Heart right ventricle (tissue), 16 donors: ENCODE measurements at regions of chr17 and their contacts with region 1.

Region 1: GRCh38 chr17:66975604-66976384 is 11.3 kb downstream of the CACNG4 start:
- DNase-seq: peak in 1 of 2 donors; percentile 45
- ATAC-seq: peak in 6 of 8 donors; percentile 16 to 57 (median 36)
- H3K4me3 ChIP-seq: no peak overlapping the region
- H3K27ac ChIP-seq: no peak overlapping the region
- H3K4me1 ChIP-seq: peaks cover 0 to 42% (median 21%) of the 10 kb centered on the region in 9 donors
- H3K27me3 ChIP-seq: peaks cover 3 to 49% (median 21%) of the 10 kb centered on the region in 7 donors
- CTCF ChIP-seq: peak in 4 of 9 donors; percentile 17 to 44 (median 32)

Region 2: GRCh38 chr17:66963987-66964804 is 11.6 kb before region 1 on chr17 and contains the start of gene CACNG4:
- intact Hi-C with region 1: no loop called
- DNase-seq: no peak
- ATAC-seq: peak in 1 of 8 donors; percentile 38
- H3K4me3 ChIP-seq: peak within 1 kb of the TSS in 9 of 10 donors; percentile 16 to 49 (median 40)
- H3K27ac ChIP-seq: no peak within 1 kb of the TSS
- H3K4me1 ChIP-seq: peaks cover 2 to 22% (median 13%) of the 10 kb centered on the region in 9 donors
- H3K27me3 ChIP-seq: peaks cover 0 to 86% (median 63%) of the 10 kb centered on the region in 7 donors
- CTCF ChIP-seq: no peak
- total RNA-seq, gene CACNG4: 0.06 to 0.11 (median 0.08) TPM in 4 of 10 donors, not detected in the others

Region 3: GRCh38 chr17:67105213-67105612 is 129.4 kb after region 1 on chr17:
- intact Hi-C with region 1: loop called in 1 of 10 experiments (anchors 10 kb)
- DNase-seq: no peak
- ATAC-seq: peak in 5 of 8 donors; percentile 22 to 75 (median 61)
- H3K4me3 ChIP-seq: no peak overlapping the region
- H3K27ac ChIP-seq: peak overlapping the region in 1 of 10 donors; percentile 13
- H3K4me1 ChIP-seq: peaks cover 0 to 23% (median 16%) of the 10 kb centered on the region in 9 donors
- H3K27me3 ChIP-seq: no peaks in the 10 kb centered on the region
- CTCF ChIP-seq: no peak